Posterior cingulate gyrus (tissue), 11 donors: ENCODE measurements at regions of chr14 and their contacts with region 1.

Region 1: DNA sequence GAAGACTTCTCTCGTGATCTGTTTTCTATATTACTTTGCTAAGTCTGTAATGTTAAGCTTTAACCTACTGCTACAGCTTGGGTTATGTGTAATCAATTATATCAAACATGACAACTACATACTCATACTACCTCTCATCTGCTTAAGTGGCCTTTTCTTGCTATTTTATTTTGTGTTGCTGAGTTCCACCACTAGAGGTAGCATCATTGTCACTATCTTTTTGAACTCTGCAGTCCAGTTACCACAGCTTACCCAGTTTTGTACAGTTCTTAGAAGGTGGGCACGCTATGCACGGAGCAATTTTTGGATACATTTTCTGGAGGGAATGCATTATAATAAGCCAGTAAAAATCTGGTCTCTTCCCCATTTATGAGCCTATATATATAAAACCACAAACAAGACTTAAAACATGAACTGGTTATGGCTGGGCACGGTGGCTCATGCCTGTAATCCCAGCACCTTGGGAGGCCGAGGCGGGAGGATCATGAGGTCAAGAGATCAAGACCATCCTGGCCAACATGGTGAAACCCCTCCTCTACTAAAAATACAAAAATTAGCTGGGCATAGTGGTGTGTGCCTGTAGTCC is 48.5 kb downstream of the SAV1 start:
- DNase-seq: no peak

Region 2: DNA sequence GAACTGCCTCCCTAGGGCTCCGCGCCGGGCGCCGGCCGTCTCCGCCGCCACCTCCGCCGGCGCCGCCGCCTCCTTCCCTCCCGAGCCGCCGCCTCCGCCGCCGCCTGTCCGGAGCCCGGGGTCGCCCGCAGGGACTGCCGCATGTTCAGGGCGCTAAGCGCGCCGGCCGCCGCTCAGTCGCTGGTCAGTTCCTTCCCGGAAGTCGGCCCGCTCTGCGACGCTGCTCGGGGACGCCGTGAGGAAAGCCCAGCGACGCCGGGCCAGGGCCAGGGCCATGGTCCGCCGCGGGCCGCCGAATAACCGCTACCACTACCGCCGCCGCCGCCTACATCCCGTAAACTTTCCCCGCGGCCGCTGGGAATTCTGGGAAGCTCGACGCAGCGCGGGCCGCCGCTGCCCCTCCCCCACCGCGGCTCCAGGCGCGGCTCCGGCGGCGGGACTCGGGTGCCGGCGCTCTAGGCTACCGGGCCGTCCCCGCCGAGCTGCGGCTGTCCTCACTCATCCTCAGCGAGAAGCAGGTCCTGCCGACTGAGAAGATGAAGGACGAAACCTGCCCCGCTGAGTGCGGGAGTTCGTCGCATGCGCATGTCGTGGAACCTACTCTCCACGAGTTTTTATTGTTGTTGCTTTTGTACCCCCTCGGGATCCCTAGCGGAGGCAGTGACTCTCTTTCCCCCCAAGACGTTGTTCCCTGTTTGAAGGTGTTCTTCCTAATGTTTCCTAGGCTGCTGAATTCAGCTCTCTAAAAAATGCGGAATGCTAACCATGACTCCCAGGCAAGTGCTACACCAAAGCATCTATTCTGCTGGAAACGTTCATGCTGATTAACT is 48.6 kb after region 1 on chr14 and contains the start of gene SAV1:
- intact Hi-C with region 1: loop called (anchors 5 kb)
- DNase-seq: peak; percentile 65 to 96 (median 76)

Region 3: GRCh38 chr14:50714450-50715073 is 94.9 kb after region 1 on chr14:
- intact Hi-C with region 1: loop called (anchors 5 kb)
- DNase-seq: no peak

Region 4: DNA sequence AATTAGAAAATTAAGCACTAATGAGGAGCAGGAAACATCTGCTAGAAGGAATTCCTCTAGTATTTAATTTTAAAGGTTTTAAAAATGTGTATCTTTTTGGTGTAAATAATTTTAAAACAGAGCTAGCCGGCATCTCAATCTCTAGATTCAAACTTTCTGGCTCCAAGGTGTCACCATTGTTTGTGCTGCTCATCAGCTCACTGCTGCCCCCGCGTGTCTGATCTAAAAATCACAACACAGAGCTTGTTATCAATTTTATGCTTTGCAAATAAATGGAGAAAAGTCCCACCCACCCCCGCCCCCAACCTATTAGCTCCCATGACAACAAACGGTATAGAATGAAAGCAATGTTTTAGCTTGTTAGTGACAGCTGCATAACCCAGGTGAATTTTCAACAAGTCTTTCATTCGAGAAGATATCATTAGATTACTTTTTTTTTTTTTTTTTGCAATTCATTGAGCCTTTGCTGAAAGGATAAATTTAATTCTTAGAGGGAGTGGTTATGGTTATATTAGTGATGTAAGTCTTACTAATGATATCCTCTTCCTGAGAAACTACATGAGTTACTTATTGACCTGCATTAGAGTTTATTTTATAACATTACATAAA is 240.9 kb after region 1 on chr14:
- intact Hi-C with region 1: loop called (anchors 10 kb)
- DNase-seq: peak; percentile 71 to 96 (median 85)